Activated B cell treated with CpG ODN at 0.5 μM for 24 hours (primary cell): ENCODE measurements at regions of chr10 and their contacts with region 1.

Region 1: GRCh38 chr10:5862360-5862961 is 27.2 kb downstream of the ANKRD16 start:
- DNase-seq: no peak
- ATAC-seq: peak; percentile 71
- H3K4me3 Mint-ChIP-seq: peak overlapping the region; percentile 61
- H3K27ac Mint-ChIP-seq: peak overlapping the region; percentile 87
- H3K4me1 Mint-ChIP-seq: peaks cover 41% of the 10 kb centered on the region
- H3K27me3 Mint-ChIP-seq: no peaks in the 10 kb centered on the region
- CTCF ChIP-seq: no peak

Region 2: DNA sequence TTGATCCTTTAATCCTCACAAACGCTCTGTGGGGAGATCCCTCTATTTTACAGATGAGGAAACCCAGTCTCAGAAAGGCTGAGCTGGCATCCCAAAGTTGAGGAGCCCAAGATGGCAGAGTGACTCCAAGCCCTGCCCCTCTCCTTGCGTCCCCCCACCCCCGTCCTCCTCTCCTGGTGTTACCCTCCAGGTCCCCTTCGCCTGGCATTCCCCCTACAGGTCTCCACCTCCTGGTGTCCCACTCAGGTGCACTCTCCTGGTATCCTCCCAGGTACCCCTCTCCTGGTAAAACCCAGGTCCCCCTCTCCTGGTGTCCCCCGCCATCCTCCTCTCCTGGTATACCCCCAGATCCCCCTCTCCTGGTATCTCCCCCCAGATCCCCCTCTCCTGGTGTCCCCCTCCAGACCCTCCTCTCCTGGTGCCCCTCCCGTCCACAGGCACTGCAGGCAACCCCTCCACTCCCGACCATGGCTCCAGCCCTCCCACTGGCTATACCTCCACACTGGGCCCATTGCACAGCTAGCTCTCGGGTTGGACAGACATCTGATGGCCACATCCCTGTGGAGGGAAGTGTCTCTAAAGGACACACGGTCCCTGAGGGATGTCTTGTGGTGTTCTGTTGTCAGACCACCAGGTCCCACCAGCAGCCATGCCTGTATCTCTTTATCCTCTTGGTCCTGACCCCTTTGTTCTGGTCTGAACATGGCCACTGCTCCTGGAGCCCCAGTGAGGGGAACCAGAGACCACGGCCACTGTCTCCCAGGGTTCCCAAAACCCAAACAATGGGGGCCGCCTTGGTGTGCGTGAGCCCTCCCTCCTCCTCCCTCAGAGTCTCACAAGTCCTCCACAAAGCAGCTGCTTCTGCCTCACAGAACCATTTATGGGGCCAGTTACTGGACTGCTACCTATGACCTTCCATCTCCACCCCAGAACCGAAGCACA is 300.5 kb before region 1 on chr10:
- CTCF ChIA-PET with region 1: no interaction called
- POLR2A ChIA-PET with region 1: interaction called, 12 read pairs
- intact Hi-C with region 1: no loop called
- DNase-seq: no peak
- ATAC-seq: no peak
- H3K4me3 Mint-ChIP-seq: no peak overlapping the region
- H3K27ac Mint-ChIP-seq: no peak overlapping the region
- H3K4me1 Mint-ChIP-seq: no peaks in the 10 kb centered on the region
- H3K27me3 Mint-ChIP-seq: peaks cover 16% of the 10 kb centered on the region
- CTCF ChIP-seq: no peak

Region 3: DNA sequence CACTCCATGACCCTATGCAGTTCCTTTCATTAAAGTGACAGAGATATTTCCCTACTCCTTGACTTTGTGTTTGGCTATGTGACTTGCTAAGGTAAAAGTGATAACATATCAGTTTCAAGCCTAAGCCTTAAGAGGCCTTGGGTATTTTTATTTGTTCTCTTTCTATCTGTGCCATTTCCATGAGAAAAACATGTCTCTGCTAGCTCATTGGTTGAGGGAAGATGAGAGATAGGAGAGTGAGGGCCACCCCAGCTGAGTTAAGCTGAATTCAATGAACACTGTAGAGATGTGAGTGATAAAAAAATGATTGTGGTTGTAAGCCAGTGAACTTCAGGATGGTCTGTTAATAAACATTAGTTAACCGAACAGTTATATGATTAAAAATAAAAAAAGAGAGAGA is 164.4 kb before region 1 on chr10:
- CTCF ChIA-PET with region 1: no interaction called
- POLR2A ChIA-PET with region 1: interaction called, 14 read pairs
- intact Hi-C with region 1: no loop called
- DNase-seq: no peak
- ATAC-seq: no peak
- H3K4me3 Mint-ChIP-seq: no peak overlapping the region
- H3K27ac Mint-ChIP-seq: no peak overlapping the region
- H3K4me1 Mint-ChIP-seq: peaks cover 50% of the 10 kb centered on the region
- H3K27me3 Mint-ChIP-seq: no peaks in the 10 kb centered on the region
- CTCF ChIP-seq: no peak